ENCODE measurements at regions of chr14 and their contacts with region 1.

Region 1: DNA sequence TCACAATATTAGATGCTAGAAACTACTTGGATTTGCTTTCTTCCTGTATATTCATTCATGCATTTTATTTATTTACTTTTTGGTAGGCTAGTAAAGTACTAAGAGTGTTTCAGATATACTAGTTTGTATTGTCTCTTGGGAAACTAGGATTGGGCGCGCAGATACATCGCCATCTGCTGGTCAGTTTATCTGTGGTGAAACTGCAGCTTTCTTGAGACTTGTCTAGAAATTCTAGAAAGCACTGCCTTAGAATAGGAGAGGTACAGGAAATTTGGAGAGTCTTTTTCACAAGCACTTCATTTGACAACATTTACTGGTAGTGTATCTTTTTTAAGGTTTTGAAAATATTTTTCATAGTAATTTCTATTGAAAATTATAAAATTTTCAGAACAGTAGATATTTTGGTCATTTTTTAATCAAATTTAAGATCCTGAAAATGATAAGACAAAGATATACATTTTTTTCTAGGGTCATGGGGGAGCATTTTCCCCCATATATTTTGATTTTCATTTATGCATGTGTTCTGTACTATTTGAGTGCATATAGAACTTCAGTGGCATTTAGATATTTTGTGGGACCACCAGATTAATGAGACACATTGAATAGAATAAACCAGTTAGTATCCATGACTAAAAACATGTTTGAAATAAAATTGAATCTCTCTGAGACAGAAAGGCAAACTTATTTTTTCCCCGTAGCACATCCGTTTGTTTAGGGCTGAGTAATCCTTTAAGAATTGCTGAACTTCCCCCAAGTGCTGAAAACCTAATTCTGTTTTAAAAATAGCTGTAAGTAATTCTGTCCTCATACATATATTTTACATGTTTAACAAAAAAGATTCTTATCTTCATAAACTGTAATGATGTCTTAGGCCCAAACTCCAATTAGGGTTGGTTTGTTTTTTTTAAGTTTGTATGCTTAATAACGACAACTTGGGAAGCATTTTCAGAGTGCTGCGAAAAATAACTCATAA is 44.5 kb downstream of the SLC38A6 start:
- DNase-seq: peak; percentile 33 to 42
- ATAC-seq: peak; percentile 69

Region 2: GRCh38 chr14:60622917-60623257 is 402.6 kb before region 1 on chr14:
- intact Hi-C with region 1: loop called (anchors 5 to 10 kb)
- DNase-seq: no peak
- ATAC-seq: no peak

Region 3: GRCh38 chr14:60628892-60629291 is 396.6 kb before region 1 on chr14:
- intact Hi-C with region 1: loop called (anchors 5 to 10 kb)
- DNase-seq: no peak
- ATAC-seq: no peak

Measured in left colon (tissue), 2 donors.